ENCODE measurements at regions of chr5 and their contacts with region 1.

Region 1: GRCh38 chr5:115841382-115842088 is at the starts of genes AP3S1 and ATG12:
- DNase-seq: peak; percentile 87
- H3K4me3 Mint-ChIP-seq: peak within 1 kb of the TSS; percentile 98
- H3K27ac Mint-ChIP-seq: peak within 1 kb of the TSS; percentile 99
- H3K4me1 Mint-ChIP-seq: peaks cover 52% of the 10 kb centered on the region
- H3K27me3 Mint-ChIP-seq: no peaks in the 10 kb centered on the region
- total RNA-seq, gene AP3S1: 49.7 and 53.5 TPM in 2 replicates
- total RNA-seq, gene ATG12: 29.6 and 37.4 TPM in 2 replicates

Region 2: DNA sequence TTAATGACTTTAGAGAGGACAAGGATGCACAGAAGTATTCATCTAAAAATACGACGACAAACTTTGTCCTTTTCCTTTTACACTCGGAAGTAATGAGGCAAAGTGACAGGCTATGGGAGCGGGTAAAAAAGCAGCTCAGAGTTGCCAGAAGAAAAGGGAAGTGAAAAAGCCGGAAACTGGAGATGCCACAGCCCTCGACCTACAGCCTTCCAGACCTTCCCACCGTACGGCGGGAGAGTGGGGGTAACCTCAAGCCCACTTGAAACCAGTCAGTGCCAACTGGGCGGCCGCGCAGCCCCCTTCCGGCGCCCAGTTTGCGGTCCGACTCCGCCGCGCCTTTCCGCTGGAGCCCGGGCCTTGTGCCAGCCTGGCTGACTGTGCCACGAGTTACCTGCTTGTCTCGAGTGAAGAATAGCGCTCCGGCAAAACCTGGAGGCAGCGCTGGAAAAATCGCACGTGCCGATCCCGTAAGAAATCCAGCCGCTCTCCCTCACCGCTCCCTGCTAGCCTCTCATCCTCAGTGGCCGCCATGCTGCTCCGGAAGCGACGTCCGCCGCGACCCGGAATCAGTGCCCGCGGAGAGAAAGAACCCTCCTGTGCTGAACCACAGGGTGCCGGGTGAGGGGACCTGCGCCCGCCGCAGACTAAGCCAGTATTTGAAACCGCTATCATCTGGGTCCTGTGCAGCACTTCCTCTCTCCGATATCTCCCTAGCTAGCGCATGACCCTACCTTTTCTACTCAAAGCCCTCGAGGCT is 579.0 kb before region 1 on chr5 and contains the start of gene PGGT1B:
- intact Hi-C with region 1: loop called (anchors 2 kb)
- DNase-seq: peak; percentile 64
- H3K4me3 Mint-ChIP-seq: peak within 1 kb of the TSS; percentile 97
- H3K27ac Mint-ChIP-seq: peak within 1 kb of the TSS; percentile 87
- H3K4me1 Mint-ChIP-seq: peaks cover 42% of the 10 kb centered on the region
- H3K27me3 Mint-ChIP-seq: peaks cover 3% of the 10 kb centered on the region
- total RNA-seq, gene PGGT1B: 42.7 and 42.9 TPM in 2 replicates

Region 3: GRCh38 chr5:115460472-115460871 is 381.1 kb before region 1 on chr5:
- intact Hi-C with region 1: loop called (anchors 2 kb)
- DNase-seq: no peak
- H3K4me3 Mint-ChIP-seq: no peak overlapping the region
- H3K27ac Mint-ChIP-seq: no peak overlapping the region
- H3K4me1 Mint-ChIP-seq: peaks cover 4% of the 10 kb centered on the region
- H3K27me3 Mint-ChIP-seq: peaks cover 17% of the 10 kb centered on the region

Region 4: GRCh38 chr5:115601701-115602590 is 239.6 kb before region 1 on chr5 and contains the start of gene TICAM2:
- intact Hi-C with region 1: loop called (anchors 1 kb)
- DNase-seq: peak; percentile 65
- H3K4me3 Mint-ChIP-seq: peak within 1 kb of the TSS; percentile 65
- H3K27ac Mint-ChIP-seq: peak within 1 kb of the TSS; percentile 80
- H3K4me1 Mint-ChIP-seq: peaks cover 35% of the 10 kb centered on the region
- H3K27me3 Mint-ChIP-seq: no peaks in the 10 kb centered on the region
- total RNA-seq, gene TICAM2: 0.59 and 1.1 TPM in 2 replicates

Region 5: DNA sequence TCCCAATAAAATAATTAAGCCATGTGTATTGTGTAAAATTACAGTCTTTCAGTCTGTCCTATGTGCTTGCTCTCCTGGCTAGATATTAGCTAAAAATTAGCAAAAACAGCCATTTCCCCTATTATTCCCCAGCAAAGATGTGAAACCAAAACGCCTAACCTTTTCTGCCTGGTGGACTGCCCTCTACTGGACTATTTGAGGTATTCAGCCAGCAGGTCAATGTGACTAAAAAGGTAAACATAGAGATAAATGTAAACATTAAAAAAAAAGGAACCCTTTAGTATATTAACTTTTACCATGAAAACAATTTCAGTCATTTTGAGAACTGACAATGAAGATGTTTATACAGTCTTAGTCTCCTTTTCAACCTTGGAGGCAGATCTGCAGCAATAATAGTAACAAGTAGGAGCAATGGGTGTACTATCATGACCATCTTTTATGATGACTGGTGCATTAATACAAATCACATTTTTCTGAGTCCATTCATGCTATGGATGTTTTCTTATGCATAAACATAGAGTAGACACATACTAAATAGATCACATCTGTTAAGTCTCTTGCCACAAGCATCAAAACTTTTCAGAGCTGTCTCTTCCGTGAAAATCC is 10.3 kb before region 1 on chr5:
- intact Hi-C with region 1: loop called (anchors 1 kb)
- DNase-seq: no peak
- H3K4me3 Mint-ChIP-seq: no peak overlapping the region
- H3K27ac Mint-ChIP-seq: no peak overlapping the region
- H3K4me1 Mint-ChIP-seq: peaks cover 13% of the 10 kb centered on the region
- H3K27me3 Mint-ChIP-seq: no peaks in the 10 kb centered on the region